ENCODE measurements at regions of chr2 and their contacts with region 1.

Region 1: GRCh38 chr2:234288974-234289455 is 207.9 kb downstream of the ARL4C start:
- DNase-seq: peak; percentile 69
- H3K4me3 Mint-ChIP-seq: peak overlapping the region; percentile 80
- H3K27ac Mint-ChIP-seq: peak overlapping the region; percentile 99
- H3K4me1 Mint-ChIP-seq: peaks cover 91% of the 10 kb centered on the region
- H3K27me3 Mint-ChIP-seq: no peaks in the 10 kb centered on the region

Region 2: DNA sequence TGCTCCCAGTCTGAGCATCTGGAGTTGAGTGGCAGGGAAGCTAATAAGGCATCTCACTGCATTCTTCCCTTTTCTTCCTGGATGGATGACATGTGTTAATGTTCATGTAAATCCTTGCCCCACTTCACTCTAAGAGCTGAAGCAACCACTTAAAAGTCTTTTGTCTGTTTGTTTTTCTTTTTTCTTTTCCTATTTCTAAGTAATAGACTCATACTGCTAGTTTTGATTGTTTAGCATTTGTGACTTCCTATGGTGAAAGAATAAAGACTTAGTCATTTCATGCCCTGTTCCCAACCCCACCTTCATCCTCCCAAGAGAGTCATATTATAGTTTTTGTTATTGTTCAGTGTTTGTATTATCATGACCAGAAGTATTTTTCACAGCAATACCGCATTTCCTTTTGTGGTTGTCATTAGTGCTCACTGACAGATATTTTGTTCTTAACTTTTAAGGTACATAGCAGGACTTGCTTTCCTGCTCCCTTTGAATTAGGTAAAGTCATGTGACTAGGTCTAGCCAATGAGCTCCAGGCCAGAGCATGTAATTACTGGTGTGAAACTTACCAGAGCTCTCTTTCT is 256.6 kb before region 1 on chr2:
- intact Hi-C with region 1: loop called (anchors 1 kb)
- DNase-seq: peak; percentile 24
- H3K4me3 Mint-ChIP-seq: no peak overlapping the region
- H3K27ac Mint-ChIP-seq: peak overlapping the region; percentile 20
- H3K4me1 Mint-ChIP-seq: peaks cover 27% of the 10 kb centered on the region
- H3K27me3 Mint-ChIP-seq: peaks cover 14% of the 10 kb centered on the region

Region 3: DNA sequence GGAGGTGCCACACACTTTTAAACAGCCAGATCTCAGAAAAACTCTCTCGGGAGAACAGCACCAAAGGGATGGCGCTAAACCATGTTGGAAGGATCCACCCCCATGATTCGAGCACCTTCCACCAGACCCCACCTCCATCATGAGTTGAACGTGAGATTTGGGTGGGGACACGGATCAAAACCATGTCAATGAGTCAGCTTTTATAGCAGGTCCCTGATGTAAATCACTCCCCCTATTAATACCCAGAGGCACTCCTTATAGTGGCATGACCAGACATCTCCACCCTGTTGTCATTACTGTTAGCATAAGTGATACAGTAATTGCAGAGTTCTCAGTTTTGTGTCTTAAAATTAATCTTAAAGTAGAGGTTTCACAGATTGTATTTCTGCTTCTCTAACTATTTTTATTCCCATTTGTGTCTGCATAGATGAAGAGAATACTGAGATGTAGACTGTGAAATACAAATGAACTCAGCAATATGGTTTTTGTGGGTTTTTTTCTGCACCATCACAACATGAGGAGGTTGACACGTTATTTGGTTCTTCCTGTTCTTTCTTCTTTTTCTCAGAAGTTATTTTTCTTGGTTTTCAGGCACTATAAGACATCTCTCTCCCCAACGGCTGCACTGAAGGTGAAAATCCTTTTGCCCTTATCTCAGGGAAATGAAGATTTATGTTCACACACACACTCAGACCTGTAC is 10.3 kb before region 1 on chr2:
- intact Hi-C with region 1: loop called (anchors 1 kb)
- DNase-seq: peak; percentile 35
- H3K4me3 Mint-ChIP-seq: peak overlapping the region; percentile 44
- H3K27ac Mint-ChIP-seq: peak overlapping the region; percentile 82
- H3K4me1 Mint-ChIP-seq: peaks cover 81% of the 10 kb centered on the region
- H3K27me3 Mint-ChIP-seq: no peaks in the 10 kb centered on the region

Region 4: GRCh38 chr2:234355021-234355720 is 66.2 kb after region 1 on chr2:
- intact Hi-C with region 1: no loop called
- DNase-seq: no peak
- H3K4me3 Mint-ChIP-seq: no peak overlapping the region
- H3K27ac Mint-ChIP-seq: no peak overlapping the region
- H3K4me1 Mint-ChIP-seq: peaks cover 20% of the 10 kb centered on the region
- H3K27me3 Mint-ChIP-seq: no peaks in the 10 kb centered on the region

Region 5: DNA sequence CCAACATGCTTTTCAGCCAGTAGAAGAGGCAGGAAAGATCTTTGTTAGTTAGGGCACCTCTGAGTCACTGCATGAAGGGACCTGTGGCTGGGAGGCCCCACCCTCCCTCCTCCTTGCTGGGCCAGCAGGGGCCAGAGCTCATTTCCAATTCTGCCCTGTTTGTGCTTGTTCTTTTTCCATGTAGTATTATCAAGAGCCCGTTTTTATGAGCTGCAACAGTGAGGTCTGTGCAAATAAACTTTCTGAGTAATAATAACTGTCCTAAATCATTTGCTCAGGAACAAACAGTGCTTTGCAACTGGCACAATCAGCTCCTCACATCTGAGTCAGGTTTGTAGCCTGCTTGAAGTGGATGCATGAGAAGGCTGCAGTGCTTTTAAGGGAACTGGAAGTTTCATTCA is 79.8 kb after region 1 on chr2:
- intact Hi-C with region 1: loop called (anchors 1 kb)
- DNase-seq: peak; percentile 35
- H3K4me3 Mint-ChIP-seq: peak overlapping the region; percentile 54
- H3K27ac Mint-ChIP-seq: peak overlapping the region; percentile 84
- H3K4me1 Mint-ChIP-seq: peaks cover 76% of the 10 kb centered on the region
- H3K27me3 Mint-ChIP-seq: no peaks in the 10 kb centered on the region

Region 6: DNA sequence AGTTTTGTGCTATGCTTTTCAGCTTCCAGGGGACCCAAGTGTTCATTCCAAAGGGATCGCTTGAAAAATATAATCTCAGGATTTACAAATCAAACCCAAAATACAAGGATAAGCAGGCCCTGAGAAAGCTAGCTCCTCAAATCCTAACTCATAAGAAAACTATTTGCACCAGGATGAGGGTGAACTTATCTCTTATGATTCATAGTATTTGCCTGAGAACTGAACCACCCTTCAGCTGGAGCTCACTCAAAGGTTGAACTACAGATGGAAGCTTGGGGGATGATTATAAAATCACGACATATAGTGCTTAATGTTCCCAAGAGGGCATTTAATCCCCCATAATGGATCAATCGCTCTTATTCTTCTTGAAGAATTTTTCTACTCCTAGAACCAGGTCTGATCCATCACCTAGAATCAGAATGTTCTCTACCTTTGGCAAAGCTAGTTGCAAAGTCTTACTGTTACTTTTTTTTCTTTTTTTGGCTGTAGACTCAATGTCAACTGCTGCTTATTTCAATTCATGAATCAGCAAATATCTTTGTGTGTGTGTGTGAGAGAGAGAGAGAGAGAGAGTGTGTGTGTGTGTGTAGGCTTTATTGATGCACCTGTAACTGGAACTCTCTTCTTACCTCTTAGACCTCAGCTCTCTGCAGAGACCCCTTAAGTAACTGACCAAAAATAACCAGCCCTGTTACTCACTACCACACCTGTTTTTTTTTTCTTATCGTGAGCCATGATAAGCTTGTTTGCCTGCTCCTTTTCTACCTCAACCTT is 163.0 kb after region 1 on chr2:
- intact Hi-C with region 1: loop called (anchors 1 kb)
- DNase-seq: no peak
- H3K4me3 Mint-ChIP-seq: peak overlapping the region; percentile 79
- H3K27ac Mint-ChIP-seq: peak overlapping the region; percentile 90
- H3K4me1 Mint-ChIP-seq: peaks cover 88% of the 10 kb centered on the region
- H3K27me3 Mint-ChIP-seq: peaks cover 2% of the 10 kb centered on the region

Region 7: DNA sequence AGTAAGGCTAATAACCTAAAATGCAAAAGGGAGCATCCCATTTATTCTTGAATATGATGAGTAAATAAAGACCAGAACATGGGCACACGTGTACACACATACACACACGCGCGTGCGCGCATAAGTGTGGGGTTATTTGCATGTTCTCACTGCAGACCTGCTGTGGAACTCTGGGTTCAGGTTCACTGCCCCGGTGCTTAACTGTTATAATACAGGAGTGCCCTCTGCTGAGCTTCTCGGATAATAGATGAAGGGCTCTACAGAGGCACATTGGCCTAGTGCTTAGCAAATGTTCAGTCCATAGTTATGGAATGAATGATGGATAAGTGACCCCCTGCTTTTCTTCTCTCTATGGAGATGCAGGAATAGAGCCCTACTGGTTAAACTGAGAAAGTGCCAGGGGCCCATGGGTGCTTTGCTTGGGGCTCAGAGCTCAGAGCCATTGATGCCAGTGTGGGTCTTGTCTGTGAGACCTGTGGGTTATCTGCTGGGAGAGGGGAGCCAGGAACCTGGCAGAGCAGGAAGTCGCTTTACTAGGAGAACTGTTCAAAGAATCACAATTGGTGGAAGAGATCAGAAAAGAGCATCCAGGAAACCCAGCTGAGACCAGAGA is 211.5 kb after region 1 on chr2:
- intact Hi-C with region 1: loop called (anchors 1 kb)
- DNase-seq: peak; percentile 72
- H3K4me3 Mint-ChIP-seq: peak overlapping the region; percentile 58
- H3K27ac Mint-ChIP-seq: peak overlapping the region; percentile 34
- H3K4me1 Mint-ChIP-seq: peaks cover 32% of the 10 kb centered on the region
- H3K27me3 Mint-ChIP-seq: peaks cover 13% of the 10 kb centered on the region

Region 8: GRCh38 chr2:235908826-235909225 is 1619.8 kb after region 1 on chr2:
- intact Hi-C with region 1: no loop called
- DNase-seq: no peak
- H3K4me3 Mint-ChIP-seq: no peak overlapping the region
- H3K27ac Mint-ChIP-seq: no peak overlapping the region
- H3K4me1 Mint-ChIP-seq: no peaks in the 10 kb centered on the region
- H3K27me3 Mint-ChIP-seq: peaks cover 4% of the 10 kb centered on the region

Measured in activated T-helper 1 cell treated with anti-CD3 and anti-CD28 coated beads, Interleukin-12 subunit alpha, Interleukin-12 subunit beta, Interleukin-2, Interleukin-4 antibody, amounts not matched to agents 30 ng/mL and 10 ng/mL and 1 ng/mL, durations not matched to agents 14 hours and 24 hours and 36 hours (primary cell).